ENCODE measurements at regions of chr7 and their contacts with region 1.

Region 1: GRCh38 chr7:144127703-144128334 is 4.8 kb downstream of the OR2A14 start:
- DNase-seq: peak; percentile 69 to 90 (median 84)
- ATAC-seq: peak; percentile 98
- H3K4me3 ChIP-seq: no peak overlapping the region
- H3K4me3 Mint-ChIP-seq: no peak overlapping the region
- H3K27ac ChIP-seq: no peak overlapping the region
- H3K27ac Mint-ChIP-seq: no peak overlapping the region
- H3K4me1 ChIP-seq: no peaks in the 10 kb centered on the region
- H3K4me1 Mint-ChIP-seq: no peaks in the 10 kb centered on the region
- H3K27me3 ChIP-seq: no peaks in the 10 kb centered on the region
- H3K27me3 Mint-ChIP-seq: no peaks in the 10 kb centered on the region
- CTCF ChIP-seq: peak; percentile 85

Region 2: GRCh38 chr7:143733876-143734275 is 393.9 kb before region 1 on chr7:
- CTCF ChIA-PET with region 1: interaction called, 18 read pairs
- POLR2A ChIA-PET with region 1: no interaction called
- intact Hi-C with region 1: loop called in 1 of 2 experiments (anchors 5 kb)
- DNase-seq: no peak
- ATAC-seq: no peak
- H3K4me3 ChIP-seq: no peak overlapping the region
- H3K4me3 Mint-ChIP-seq: no peak overlapping the region
- H3K27ac ChIP-seq: no peak overlapping the region
- H3K27ac Mint-ChIP-seq: no peak overlapping the region
- H3K4me1 ChIP-seq: no peaks in the 10 kb centered on the region
- H3K4me1 Mint-ChIP-seq: peaks cover 6% of the 10 kb centered on the region
- H3K27me3 ChIP-seq: no peaks in the 10 kb centered on the region
- H3K27me3 Mint-ChIP-seq: no peaks in the 10 kb centered on the region
- CTCF ChIP-seq: no peak

Region 3: DNA sequence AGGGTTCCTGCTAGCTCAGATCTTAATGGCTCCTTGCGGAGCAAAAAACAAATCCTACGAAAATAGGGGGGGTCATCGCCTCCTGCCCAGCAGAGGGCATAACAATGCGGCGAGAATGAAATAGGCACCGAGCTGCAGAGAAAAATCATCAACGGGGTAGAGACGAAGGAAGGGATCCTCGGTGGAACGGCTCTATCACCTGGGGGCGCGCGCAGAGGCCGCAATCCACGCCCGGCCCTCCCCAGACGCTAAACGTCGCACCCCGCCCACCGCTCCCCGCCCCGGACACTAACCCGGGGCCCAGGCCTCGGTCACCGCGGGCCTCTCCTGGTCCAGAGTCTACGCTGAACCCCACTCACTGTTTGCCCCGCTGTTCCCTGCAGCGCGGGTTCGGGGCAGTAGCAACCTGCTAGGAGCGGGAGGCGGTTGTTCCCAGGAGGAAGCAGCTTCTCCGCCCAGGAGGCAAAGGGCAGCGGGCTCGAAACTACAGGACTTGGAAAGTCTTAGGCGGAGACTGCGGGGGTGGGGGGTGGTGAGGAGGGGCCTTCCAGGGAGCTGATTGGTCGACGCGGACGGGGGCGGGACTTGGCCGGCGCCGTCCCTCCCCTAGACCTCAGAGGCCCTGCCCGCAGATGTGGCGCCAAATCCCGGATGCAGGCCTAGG is 226.0 kb before region 1 on chr7 and contains the start of gene TCAF1:
- CTCF ChIA-PET with region 1: interaction called, 6 read pairs
- POLR2A ChIA-PET with region 1: no interaction called
- intact Hi-C with region 1: loop called (anchors 2 to 5 kb)
- DNase-seq: peak; percentile 70 to 94 (median 88)
- ATAC-seq: peak; percentile 92
- H3K4me3 ChIP-seq: peak within 1 kb of the TSS; percentile 83 to 92
- H3K4me3 Mint-ChIP-seq: peak within 1 kb of the TSS; percentile 90
- H3K27ac ChIP-seq: peak within 1 kb of the TSS; percentile 65 to 67
- H3K27ac Mint-ChIP-seq: peak within 1 kb of the TSS; percentile 94
- H3K4me1 ChIP-seq: peaks cover 19% of the 10 kb centered on the region
- H3K4me1 Mint-ChIP-seq: peaks cover 45% of the 10 kb centered on the region
- H3K27me3 ChIP-seq: no peaks in the 10 kb centered on the region
- H3K27me3 Mint-ChIP-seq: no peaks in the 10 kb centered on the region
- CTCF ChIP-seq: no peak
- total RNA-seq, gene TCAF1: 4.8 to 5.0 TPM

Region 4: GRCh38 chr7:144086730-144087129 is 41.1 kb before region 1 on chr7:
- CTCF ChIA-PET with region 1: no interaction called
- POLR2A ChIA-PET with region 1: no interaction called
- intact Hi-C with region 1: no loop called
- DNase-seq: no peak
- ATAC-seq: no peak
- H3K4me3 ChIP-seq: no peak overlapping the region
- H3K4me3 Mint-ChIP-seq: no peak overlapping the region
- H3K27ac ChIP-seq: no peak overlapping the region
- H3K27ac Mint-ChIP-seq: no peak overlapping the region
- H3K4me1 ChIP-seq: no peaks in the 10 kb centered on the region
- H3K4me1 Mint-ChIP-seq: no peaks in the 10 kb centered on the region
- H3K27me3 ChIP-seq: no peaks in the 10 kb centered on the region
- H3K27me3 Mint-ChIP-seq: peaks cover 12% of the 10 kb centered on the region
- CTCF ChIP-seq: no peak

Region 5: DNA sequence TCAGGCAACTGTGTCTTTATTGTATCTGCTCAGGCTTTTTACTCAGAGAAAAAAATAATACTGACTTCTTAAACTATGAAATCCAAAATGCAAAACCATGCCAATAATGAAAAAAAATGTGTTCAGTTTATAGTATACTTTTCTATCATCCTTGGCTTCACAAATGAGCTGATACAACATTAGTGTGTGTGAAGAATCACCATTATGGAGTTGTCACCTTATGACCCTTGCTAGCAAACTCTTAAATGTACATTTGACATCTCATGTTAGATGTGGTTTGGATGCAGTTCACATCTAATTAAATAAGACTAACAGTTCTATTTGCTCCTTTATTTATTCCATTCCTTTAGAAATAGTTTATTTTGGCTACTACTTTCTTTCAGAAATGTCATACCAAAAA is 22.6 kb before region 1 on chr7:
- CTCF ChIA-PET with region 1: no interaction called
- POLR2A ChIA-PET with region 1: no interaction called
- intact Hi-C with region 1: no loop called
- DNase-seq: no peak
- ATAC-seq: no peak
- H3K4me3 ChIP-seq: no peak overlapping the region
- H3K4me3 Mint-ChIP-seq: no peak overlapping the region
- H3K27ac ChIP-seq: no peak overlapping the region
- H3K27ac Mint-ChIP-seq: no peak overlapping the region
- H3K4me1 ChIP-seq: no peaks in the 10 kb centered on the region
- H3K4me1 Mint-ChIP-seq: peaks cover 10% of the 10 kb centered on the region
- H3K27me3 ChIP-seq: no peaks in the 10 kb centered on the region
- H3K27me3 Mint-ChIP-seq: no peaks in the 10 kb centered on the region
- CTCF ChIP-seq: no peak

Measured in CD8-positive, alpha-beta T cell (primary cell).